Activated CD8-positive, alpha-beta T cell treated with anti-CD3 and anti-CD28 coated beads, Interleukin-2, amount 10 ng/mL, durations not matched to agents 7 days and 5 days (primary cell): ENCODE measurements at regions of chr2 and their contacts with region 1.

Region 1: DNA sequence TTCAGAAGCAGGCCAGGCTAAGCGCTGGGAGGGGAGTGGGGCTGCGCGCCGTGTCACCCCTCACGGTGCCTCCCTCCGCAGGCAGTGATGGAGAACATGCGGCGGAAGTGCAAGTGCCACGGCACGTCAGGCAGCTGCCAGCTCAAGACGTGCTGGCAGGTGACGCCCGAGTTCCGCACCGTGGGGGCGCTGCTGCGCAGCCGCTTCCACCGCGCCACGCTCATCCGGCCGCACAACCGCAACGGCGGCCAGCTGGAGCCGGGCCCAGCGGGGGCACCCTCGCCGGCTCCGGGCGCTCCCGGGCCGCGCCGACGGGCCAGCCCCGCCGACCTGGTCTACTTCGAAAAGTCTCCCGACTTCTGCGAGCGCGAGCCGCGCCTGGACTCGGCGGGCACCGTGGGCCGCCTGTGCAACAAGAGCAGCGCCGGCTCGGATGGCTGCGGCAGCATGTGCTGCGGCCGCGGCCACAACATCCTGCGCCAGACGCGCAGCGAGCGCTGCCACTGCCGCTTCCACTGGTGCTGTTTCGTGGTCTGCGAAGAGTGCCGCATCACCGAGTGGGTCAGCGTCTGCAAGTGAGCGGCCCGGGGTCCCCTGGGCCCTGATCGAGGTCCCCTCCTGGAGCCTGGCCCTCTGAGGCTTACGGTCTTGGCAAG is 12.2 kb downstream of the WNT10A start:
- DNase-seq: peak; percentile 84
- ATAC-seq: peak; percentile 61
- H3K4me3 Mint-ChIP-seq: peak overlapping the region; percentile 72
- H3K27ac Mint-ChIP-seq: peak overlapping the region; percentile 79
- H3K4me1 Mint-ChIP-seq: peaks cover 48% of the 10 kb centered on the region
- H3K27me3 Mint-ChIP-seq: peaks cover 52% of the 10 kb centered on the region

Region 2: GRCh38 chr2:218745559-218746469 is 147.0 kb before region 1 on chr2:
- CTCF ChIA-PET with region 1: no interaction called
- POLR2A ChIA-PET with region 1: no interaction called
- DNase-seq: no peak
- ATAC-seq: no peak
- H3K4me3 Mint-ChIP-seq: no peak overlapping the region
- H3K27ac Mint-ChIP-seq: no peak overlapping the region
- H3K4me1 Mint-ChIP-seq: no peaks in the 10 kb centered on the region
- H3K27me3 Mint-ChIP-seq: no peaks in the 10 kb centered on the region

Region 3: DNA sequence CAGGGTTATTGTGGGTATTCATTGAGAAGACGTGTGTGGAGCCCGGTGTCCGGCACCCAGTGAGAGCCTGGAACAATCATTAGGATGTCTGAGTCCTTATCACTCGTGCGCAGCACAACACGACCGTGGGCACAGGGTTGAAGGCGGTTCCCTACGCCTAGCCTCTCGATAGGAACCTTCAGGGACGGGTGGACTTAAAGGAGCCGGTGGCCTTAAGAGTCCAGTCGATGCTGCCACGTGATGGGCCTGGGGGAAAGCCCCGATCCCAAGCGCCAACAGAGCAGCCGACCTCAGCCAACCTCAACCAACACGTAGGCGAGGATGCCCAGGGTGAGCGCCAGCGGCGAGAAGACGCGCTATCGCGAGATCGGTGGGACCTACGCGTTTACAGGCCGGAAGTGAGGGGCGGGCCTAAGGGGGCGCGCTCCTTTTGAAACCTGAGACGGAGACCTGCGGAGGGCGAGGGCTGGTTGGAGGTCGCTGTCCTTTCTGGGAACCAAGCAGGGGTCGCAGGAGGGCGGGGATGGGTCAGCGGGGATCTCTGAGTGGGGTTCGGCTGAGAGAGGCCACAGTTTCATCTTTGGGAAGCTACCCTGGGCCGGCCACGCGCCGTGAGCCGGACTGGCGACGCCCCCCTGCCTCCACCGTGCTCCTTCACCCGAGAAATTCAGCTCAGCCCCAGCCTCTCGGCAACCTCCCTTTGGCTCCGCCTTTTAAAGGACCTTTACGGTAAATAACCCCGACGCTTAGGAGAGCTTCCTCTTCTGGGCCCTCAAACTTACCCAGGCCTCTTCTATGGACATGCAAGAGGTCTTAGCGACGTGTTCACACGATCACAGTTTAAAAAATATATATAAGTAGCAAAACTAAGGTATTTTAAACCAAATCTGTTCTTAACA is 16.1 kb after region 1 on chr2:
- CTCF ChIA-PET with region 1: interaction called, 88 read pairs
- POLR2A ChIA-PET with region 1: interaction called, 6 read pairs
- DNase-seq: peak; percentile 92
- ATAC-seq: peak; percentile 97
- H3K4me3 Mint-ChIP-seq: peak overlapping the region; percentile 80
- H3K27ac Mint-ChIP-seq: peak overlapping the region; percentile 82
- H3K4me1 Mint-ChIP-seq: peaks cover 19% of the 10 kb centered on the region
- H3K27me3 Mint-ChIP-seq: peaks cover 21% of the 10 kb centered on the region